Panc1 (cell line): ENCODE measurements at regions of chr1 and their contacts with region 1.

Region 1: GRCh38 chr1:153626922-153627796 is at the start of gene S100A13:
- DNase-seq: no peak
- ATAC-seq: peak; percentile 84
- H3K4me3 ChIP-seq: peak within 1 kb of the TSS; percentile 53 to 79
- H3K27ac ChIP-seq: peak within 1 kb of the TSS; percentile 92
- H3K4me1 ChIP-seq: peaks cover 34% of the 10 kb centered on the region
- H3K27me3 ChIP-seq: no peaks in the 10 kb centered on the region
- CTCF ChIP-seq: peak; percentile 84
- total RNA-seq, gene S100A13: 111 TPM

Region 2: DNA sequence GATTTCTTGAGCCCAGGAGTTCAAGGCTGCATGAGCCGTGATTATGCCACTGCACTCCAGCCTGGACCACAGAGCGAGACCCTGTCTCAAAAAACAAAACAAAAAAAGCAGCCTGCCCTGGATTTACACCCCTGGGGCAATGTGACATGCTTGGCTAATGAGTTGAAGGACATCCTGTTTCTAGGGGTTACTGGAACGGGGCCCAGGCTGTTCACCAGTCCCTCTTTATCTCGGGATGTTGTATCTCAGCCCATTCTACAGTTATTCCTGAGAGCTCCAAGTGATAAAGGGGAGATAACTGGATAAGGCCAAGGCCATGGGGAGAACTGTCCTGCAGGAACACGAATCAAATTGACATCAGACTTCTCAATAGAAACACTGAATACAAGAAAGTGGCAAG is 39.8 kb before region 1 on chr1:
- CTCF ChIA-PET with region 1: interaction called, 10 read pairs
- POLR2A ChIA-PET with region 1: no interaction called
- in situ Hi-C with region 1: no loop called
- intact Hi-C with region 1: no loop called
- DNase-seq: no peak
- ATAC-seq: no peak; the same call in 1 of the 2 replicates
- H3K4me3 ChIP-seq: no peak overlapping the region
- H3K27ac ChIP-seq: no peak overlapping the region
- H3K4me1 ChIP-seq: no peaks in the 10 kb centered on the region
- H3K27me3 ChIP-seq: no peaks in the 10 kb centered on the region
- CTCF ChIP-seq: no peak

Region 3: DNA sequence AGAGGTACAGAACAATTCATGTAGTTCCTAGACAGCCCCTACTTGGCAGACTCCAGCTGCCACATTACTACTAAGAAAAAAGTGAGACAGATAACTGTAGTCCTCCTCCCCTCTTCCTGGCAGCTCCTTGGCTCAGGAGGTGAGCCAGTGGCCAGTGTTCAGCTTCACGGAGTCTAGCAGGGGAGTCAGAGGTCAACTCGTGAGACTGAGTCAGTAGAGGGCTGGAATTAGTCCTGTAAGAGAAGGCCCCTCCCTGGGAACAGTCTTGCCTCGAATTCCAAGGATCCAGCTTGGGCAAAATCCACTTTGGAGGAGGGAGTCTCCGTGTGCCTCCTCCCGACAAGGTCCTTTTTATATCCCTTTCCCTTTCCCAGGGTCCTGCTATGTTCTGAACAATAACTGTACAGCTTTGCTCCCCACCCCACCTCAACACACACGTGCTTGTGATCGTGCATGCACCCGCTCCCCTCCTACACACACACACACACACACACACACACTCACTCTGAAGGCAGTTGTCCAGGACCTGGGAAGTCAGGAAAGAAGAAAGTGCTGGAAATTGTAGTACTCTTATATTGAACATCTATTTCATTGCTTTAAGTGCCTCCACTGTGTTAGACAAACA is 125.5 kb after region 1 on chr1:
- CTCF ChIA-PET with region 1: no interaction called
- POLR2A ChIA-PET with region 1: no interaction called
- in situ Hi-C with region 1: no loop called
- intact Hi-C with region 1: no loop called
- DNase-seq: no peak
- ATAC-seq: no peak
- H3K4me3 ChIP-seq: no peak overlapping the region
- H3K27ac ChIP-seq: no peak overlapping the region
- H3K4me1 ChIP-seq: no peaks in the 10 kb centered on the region
- H3K27me3 ChIP-seq: no peaks in the 10 kb centered on the region
- CTCF ChIP-seq: no peak